Transverse colon (tissue), 4 donors: ENCODE measurements at regions of chr9 and their contacts with region 1.

Region 1: DNA sequence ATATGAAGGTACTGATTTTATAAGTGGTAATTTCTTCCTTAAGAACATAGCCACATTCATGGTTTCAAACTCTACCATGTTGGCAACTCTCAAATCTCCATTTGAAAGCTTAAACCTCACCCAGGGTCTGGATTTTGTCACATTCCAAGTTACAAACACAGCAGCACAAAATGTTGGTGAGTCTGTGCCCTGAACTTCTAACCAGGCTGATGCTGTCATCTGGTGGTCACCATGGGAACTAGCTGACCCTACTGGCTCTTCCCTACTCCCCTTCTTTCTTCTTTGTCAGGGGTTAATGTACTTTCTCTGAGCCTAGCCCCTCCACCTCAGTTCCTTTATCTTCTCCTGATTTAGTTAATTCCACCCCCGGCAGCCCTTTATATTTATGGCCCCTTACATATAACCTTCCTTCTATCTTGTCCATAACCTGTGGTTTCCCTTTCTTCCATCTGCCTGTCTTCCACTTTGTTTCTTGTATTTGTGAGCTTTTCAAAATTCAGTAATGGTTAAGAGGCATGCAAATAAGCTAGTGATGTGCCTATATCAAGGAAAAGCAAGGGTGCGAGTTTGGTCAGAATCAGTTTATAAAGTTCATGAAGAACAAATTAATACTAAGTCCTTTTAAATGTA is 35.9 kb downstream of the TGFBR1 start:
- DNase-seq: peak; percentile 29
- H3K4me3 ChIP-seq: no peak overlapping the region
- H3K27ac ChIP-seq: peak overlapping the region; percentile 42 to 60 (median 51)
- H3K4me1 ChIP-seq: peaks cover 0 to 27% (median 9%) of the 10 kb centered on the region in 4 donors
- H3K27me3 ChIP-seq: no peaks in the 10 kb centered on the region
- CTCF ChIP-seq: peak; percentile 75 to 81 (median 78)
- EP300 ChIP-seq: no peak
- POLR2A ChIP-seq: no peak

Region 2: GRCh38 chr9:98846879-98847278 is 293.9 kb before region 1 on chr9:
- in situ Hi-C with region 1: loop called in 3 of 4 experiments (anchors 10 to 25 kb)
- intact Hi-C with region 1: loop called (anchors 2 kb)
- DNase-seq: no peak
- H3K4me3 ChIP-seq: no peak overlapping the region
- H3K27ac ChIP-seq: no peak overlapping the region
- H3K4me1 ChIP-seq: peaks cover 0 to 18% (median 11%) of the 10 kb centered on the region in 4 donors
- H3K27me3 ChIP-seq: no peaks in the 10 kb centered on the region
- CTCF ChIP-seq: no peak
- EP300 ChIP-seq: no peak
- POLR2A ChIP-seq: no peak

Region 3: DNA sequence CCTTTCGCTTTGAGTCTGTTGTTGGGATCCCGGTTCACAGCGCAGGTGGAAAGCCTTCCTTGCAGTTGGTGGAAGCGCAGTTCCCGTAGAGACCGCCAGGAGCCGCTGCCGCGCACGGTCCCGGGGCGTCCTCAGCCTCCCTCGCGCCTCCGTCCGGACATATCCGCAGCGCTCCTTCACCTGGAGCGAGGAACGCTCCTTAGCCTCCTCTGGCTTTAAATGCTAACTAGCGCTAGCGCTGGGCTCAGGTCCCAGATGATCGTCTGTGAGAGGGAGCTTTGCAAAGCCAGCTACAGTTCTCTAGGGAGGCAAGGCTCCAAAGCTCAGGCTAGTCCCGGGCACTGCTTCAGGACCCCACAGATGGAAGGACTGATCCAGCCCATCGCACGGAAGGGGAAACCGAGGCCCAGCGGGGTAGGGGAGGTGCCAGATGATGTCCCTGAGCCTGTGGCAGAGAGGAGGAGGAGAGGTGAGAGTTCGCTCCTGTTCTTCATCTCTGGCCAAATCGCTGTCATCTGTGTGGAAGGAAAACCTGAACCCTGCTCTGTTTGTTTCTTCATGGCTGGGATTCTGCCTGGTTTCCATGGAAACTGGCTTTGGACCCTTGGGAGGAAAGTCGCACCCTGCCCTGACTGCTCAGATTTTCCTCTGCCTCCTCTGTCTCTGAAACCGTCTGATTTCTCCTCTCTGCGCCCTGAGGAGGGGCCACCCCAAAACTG is 165.6 kb before region 1 on chr9:
- in situ Hi-C with region 1: no loop called
- intact Hi-C with region 1: loop called (anchors 10 kb)
- DNase-seq: peak; percentile 89
- H3K4me3 ChIP-seq: peak overlapping the region in 2 of 4 donors; percentile 8 to 29
- H3K27ac ChIP-seq: peak overlapping the region; percentile 51 to 71 (median 69)
- H3K4me1 ChIP-seq: peaks cover 10 to 34% (median 18%) of the 10 kb centered on the region in 4 donors
- H3K27me3 ChIP-seq: peaks cover 8% of the 10 kb centered on the region
- CTCF ChIP-seq: peak; percentile 96 to 98 (median 97)
- EP300 ChIP-seq: no peak
- POLR2A ChIP-seq: no peak